ENCODE measurements at regions of chr21 and their contacts with region 1.

Region 1: GRCh38 chr21:16741141-16741665 is 771.6 kb upstream of the CXADR start:
- DNase-seq: peak in 1 of 2 donors; percentile 14
- ATAC-seq: peak in 6 of 8 donors; percentile 37 to 64 (median 44)
- H3K4me3 ChIP-seq: no peak overlapping the region
- H3K27ac ChIP-seq: peak overlapping the region in 3 of 10 donors; percentile 32 to 63 (median 48)
- H3K4me1 ChIP-seq: peaks cover 0 to 8% (median 0%) of the 10 kb centered on the region in 9 donors
- H3K27me3 ChIP-seq: no peaks in the 10 kb centered on the region
- CTCF ChIP-seq: no peak

Region 2: GRCh38 chr21:16592381-16592780 is 148.8 kb before region 1 on chr21:
- intact Hi-C with region 1: no loop called
- DNase-seq: no peak
- ATAC-seq: no peak
- H3K4me3 ChIP-seq: no peak overlapping the region
- H3K27ac ChIP-seq: peak overlapping the region in 1 of 10 donors; percentile 5
- H3K4me1 ChIP-seq: peaks cover 0 to 25% (median 8%) of the 10 kb centered on the region in 9 donors
- H3K27me3 ChIP-seq: no peaks in the 10 kb centered on the region
- CTCF ChIP-seq: no peak

Region 3: DNA sequence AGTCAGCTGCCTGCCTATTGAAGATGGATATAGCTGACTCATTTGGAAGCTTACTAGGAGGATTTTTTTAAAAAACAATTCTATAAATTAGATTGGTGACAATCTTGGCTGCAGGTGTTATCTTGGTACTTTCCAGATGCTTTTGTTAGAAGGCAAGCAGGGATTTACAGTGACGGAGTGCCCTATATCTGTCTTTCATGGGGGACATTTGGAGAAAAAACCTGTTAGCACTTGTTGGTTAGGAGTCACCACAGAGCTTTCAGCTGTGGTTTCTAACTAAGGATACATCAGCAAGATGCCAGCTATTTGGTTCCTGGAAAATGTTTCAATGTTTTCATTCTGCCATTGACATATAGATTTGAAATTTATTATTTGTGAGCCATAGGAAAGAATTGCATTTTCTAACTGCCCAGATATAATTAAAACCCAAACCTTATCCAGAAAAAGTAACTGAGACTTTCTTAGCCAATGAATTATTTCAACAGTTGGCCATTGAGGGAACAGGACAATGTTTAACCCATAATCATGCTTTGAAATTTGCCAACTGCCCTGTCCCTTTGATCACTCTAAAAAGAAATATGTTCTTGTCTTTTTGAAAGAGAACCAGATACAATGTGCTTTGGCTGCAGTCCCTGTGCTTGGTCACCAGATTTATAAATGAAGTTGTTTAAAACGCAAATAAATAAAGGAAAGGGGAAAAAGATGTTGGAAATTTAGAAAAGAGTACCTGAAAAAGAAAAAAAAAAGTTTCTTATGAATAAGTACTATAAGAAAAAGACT is 10.7 kb after region 1 on chr21:
- intact Hi-C with region 1: loop called in 1 of 10 experiments (anchors 1 kb)
- DNase-seq: no peak
- ATAC-seq: no peak
- H3K4me3 ChIP-seq: no peak overlapping the region
- H3K27ac ChIP-seq: no peak overlapping the region
- H3K4me1 ChIP-seq: no peaks in the 10 kb centered on the region
- H3K27me3 ChIP-seq: no peaks in the 10 kb centered on the region
- CTCF ChIP-seq: no peak

Region 4: GRCh38 chr21:16870103-16870502 is 128.9 kb after region 1 on chr21:
- intact Hi-C with region 1: no loop called
- DNase-seq: no peak
- ATAC-seq: no peak
- H3K4me3 ChIP-seq: no peak overlapping the region
- H3K27ac ChIP-seq: no peak overlapping the region
- H3K4me1 ChIP-seq: no peaks in the 10 kb centered on the region
- H3K27me3 ChIP-seq: no peaks in the 10 kb centered on the region
- CTCF ChIP-seq: no peak